ENCODE measurements at regions of chr17 and their contacts with region 1.

Region 1: GRCh38 chr17:47649153-47649971 is at the start of gene KPNB1:
- DNase-seq: peak; percentile 99
- ATAC-seq: peak; percentile 88
- H3K4me3 ChIP-seq: peak within 1 kb of the TSS; percentile 84
- H3K27ac ChIP-seq: peak within 1 kb of the TSS; percentile 99
- H3K4me1 ChIP-seq: peaks cover 22% of the 10 kb centered on the region
- H3K27me3 ChIP-seq: no peaks in the 10 kb centered on the region
- CTCF ChIP-seq: no peak
- EP300 ChIP-seq: peak in 1 of 2 experiments; percentile 52; a peak in 2 of 4 replicates
- POLR2A ChIP-seq: peak; percentile 76
- RAD21 ChIP-seq: no peak
- polyA plus RNA-seq, gene KPNB1: 130 to 233 TPM

Region 2: DNA sequence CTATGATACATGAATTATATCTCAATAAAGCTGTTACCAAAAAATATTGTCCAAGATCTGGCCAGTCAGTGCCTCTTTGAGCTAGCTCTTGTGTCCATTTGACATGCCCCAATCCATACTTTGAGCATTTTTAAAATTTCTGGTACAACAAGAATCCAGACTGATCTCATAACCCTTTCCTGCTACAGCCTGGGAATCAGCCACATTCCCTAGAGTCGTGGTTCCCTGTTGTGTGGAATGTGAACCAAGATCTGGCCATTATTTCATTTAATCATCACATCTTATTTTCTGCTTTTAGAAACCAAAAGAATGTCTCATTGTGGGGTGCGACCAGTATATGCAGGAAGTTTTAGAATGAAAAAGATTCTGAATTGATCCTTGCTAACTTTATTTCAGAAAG is 636.0 kb before region 1 on chr17:
- CTCF ChIA-PET with region 1: no interaction called
- POLR2A ChIA-PET with region 1: no interaction called
- RAD21 ChIA-PET with region 1: no interaction called
- SMC1A ChIA-PET with region 1: no interaction called
- in situ Hi-C with region 1: no loop called
- intact Hi-C with region 1: no loop called
- DNase-seq: no peak
- ATAC-seq: no peak
- H3K4me3 ChIP-seq: no peak overlapping the region
- H3K27ac ChIP-seq: no peak overlapping the region
- H3K4me1 ChIP-seq: no peaks in the 10 kb centered on the region
- H3K27me3 ChIP-seq: no peaks in the 10 kb centered on the region
- CTCF ChIP-seq: no peak
- EP300 ChIP-seq: no peak
- POLR2A ChIP-seq: no peak
- RAD21 ChIP-seq: no peak

Region 3: DNA sequence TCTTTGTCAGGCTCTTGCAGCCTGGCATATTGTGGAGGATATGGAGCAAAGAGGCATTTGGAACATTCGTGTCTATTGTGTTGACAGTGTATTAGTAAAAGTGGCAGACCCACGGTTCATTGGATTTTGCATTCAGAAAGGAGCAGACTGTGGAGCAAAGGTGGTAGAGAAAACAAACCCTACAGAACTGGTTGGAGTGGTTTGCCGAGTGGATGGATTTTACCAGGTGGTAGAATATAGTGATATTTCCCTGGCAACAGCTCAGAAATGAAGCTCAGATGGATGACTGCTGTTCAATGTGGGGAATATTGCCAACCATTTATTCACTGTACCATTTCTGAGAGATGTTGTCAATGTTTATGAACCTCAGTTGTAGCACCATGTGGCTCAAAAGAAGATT is 281.1 kb before region 1 on chr17:
- CTCF ChIA-PET with region 1: no interaction called
- POLR2A ChIA-PET with region 1: interaction called, 10 read pairs
- RAD21 ChIA-PET with region 1: no interaction called
- SMC1A ChIA-PET with region 1: no interaction called
- in situ Hi-C with region 1: no loop called
- intact Hi-C with region 1: no loop called
- DNase-seq: no peak
- ATAC-seq: no peak
- H3K4me3 ChIP-seq: no peak overlapping the region
- H3K27ac ChIP-seq: no peak overlapping the region
- H3K4me1 ChIP-seq: no peaks in the 10 kb centered on the region
- H3K27me3 ChIP-seq: no peaks in the 10 kb centered on the region
- CTCF ChIP-seq: no peak
- EP300 ChIP-seq: no peak
- POLR2A ChIP-seq: no peak
- RAD21 ChIP-seq: no peak

Region 4: DNA sequence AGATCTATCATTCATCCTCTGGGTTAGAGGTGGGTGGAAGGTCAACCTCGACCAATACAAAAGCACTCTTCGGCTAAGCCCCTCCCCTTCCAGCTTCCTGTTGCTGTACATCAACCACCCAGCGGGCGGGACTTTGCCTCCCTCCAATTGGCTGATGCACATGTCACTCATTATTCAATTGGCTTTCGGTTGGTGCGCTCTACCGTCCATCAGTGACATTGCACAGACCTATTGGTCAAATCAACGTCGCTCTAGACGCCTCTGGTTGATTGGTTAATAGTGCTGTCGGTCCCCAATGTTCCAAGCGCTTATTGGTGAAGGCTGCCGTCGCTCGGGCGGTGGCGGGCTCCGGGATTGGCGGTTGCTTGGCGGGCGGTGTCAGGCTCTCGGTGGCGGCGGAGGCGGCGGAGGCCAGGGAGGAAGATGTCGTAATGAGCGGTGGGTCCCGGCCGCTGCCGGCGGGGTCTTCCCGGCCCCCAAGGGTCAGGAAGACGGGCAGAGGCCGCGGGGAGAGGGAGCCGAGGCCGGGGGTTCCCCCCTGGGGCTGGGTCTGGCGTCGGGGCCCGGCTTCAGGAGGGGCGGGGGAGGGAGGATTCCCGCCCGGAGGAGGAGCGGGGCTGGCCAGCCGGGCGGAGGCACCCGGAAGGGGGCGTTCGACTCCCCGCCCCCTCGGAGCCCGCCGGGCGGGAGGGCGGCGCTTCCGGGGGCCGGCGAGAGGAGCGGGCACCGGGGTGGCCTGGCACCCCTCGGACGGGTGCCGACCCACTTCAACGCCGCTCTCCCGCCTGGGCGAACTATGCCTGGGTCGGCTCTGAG is 246.7 kb after region 1 on chr17 and contains the start of gene SP2:
- CTCF ChIA-PET with region 1: no interaction called
- POLR2A ChIA-PET with region 1: no interaction called
- RAD21 ChIA-PET with region 1: no interaction called
- SMC1A ChIA-PET with region 1: no interaction called
- in situ Hi-C with region 1: no loop called
- intact Hi-C with region 1: loop called (anchors 1 kb)
- DNase-seq: peak; percentile 100
- ATAC-seq: peak; percentile 94
- H3K4me3 ChIP-seq: peak within 1 kb of the TSS; percentile 95
- H3K27ac ChIP-seq: peak within 1 kb of the TSS; percentile 92
- H3K4me1 ChIP-seq: peaks cover 16% of the 10 kb centered on the region
- H3K27me3 ChIP-seq: no peaks in the 10 kb centered on the region
- CTCF ChIP-seq: no peak; a peak in 2 of 6 replicates
- EP300 ChIP-seq: no peak
- POLR2A ChIP-seq: peak; percentile 80
- RAD21 ChIP-seq: no peak
- polyA plus RNA-seq, gene SP2: 1.2 to 1.9 TPM